CD4-positive, alpha-beta memory T cell (primary cell): ENCODE measurements at regions of chr12 and their contacts with region 1.

Region 1: GRCh38 chr12:51341259-51342007 is 5.0 kb downstream of the CELA1 start:
- DNase-seq: peak; percentile 72 to 77 (median 75)
- H3K4me3 ChIP-seq: no peak overlapping the region
- H3K4me3 Mint-ChIP-seq: peak overlapping the region in 5 of 8 donors; percentile 39 to 77 (median 64)
- H3K27ac ChIP-seq: no peak overlapping the region
- H3K27ac Mint-ChIP-seq: peak overlapping the region in 6 of 7 donors; percentile 38 to 89 (median 68)
- H3K4me1 ChIP-seq: peaks cover 6% of the 10 kb centered on the region
- H3K4me1 Mint-ChIP-seq: peaks cover 6 to 9% (median 8%) of the 10 kb centered on the region in 4 donors
- H3K27me3 ChIP-seq: no peaks in the 10 kb centered on the region
- H3K27me3 Mint-ChIP-seq: no peaks in the 10 kb centered on the region

Region 2: GRCh38 chr12:51047655-51048540 is 293.5 kb before region 1 on chr12 and contains the start of gene LETMD1:
- CTCF ChIA-PET with region 1: interaction called, 26 read pairs
- POLR2A ChIA-PET with region 1: interaction called, 4 read pairs
- intact Hi-C with region 1: loop called (anchors 1 kb)
- DNase-seq: peak; percentile 94 to 97 (median 96)
- H3K4me3 ChIP-seq: peak within 1 kb of the TSS; percentile 92 to 98
- H3K4me3 Mint-ChIP-seq: peak within 1 kb of the TSS; percentile 93 to 98 (median 95)
- H3K27ac ChIP-seq: peak within 1 kb of the TSS; percentile 81
- H3K27ac Mint-ChIP-seq: peak within 1 kb of the TSS; percentile 95 to 99 (median 97)
- H3K4me1 ChIP-seq: peaks cover 27% of the 10 kb centered on the region
- H3K4me1 Mint-ChIP-seq: peaks cover 15 to 40% (median 28%) of the 10 kb centered on the region in 4 donors
- H3K27me3 ChIP-seq: no peaks in the 10 kb centered on the region
- H3K27me3 Mint-ChIP-seq: no peaks in the 10 kb centered on the region
- total RNA-seq, gene LETMD1: 83.7 to 93.3 TPM

Region 3: DNA sequence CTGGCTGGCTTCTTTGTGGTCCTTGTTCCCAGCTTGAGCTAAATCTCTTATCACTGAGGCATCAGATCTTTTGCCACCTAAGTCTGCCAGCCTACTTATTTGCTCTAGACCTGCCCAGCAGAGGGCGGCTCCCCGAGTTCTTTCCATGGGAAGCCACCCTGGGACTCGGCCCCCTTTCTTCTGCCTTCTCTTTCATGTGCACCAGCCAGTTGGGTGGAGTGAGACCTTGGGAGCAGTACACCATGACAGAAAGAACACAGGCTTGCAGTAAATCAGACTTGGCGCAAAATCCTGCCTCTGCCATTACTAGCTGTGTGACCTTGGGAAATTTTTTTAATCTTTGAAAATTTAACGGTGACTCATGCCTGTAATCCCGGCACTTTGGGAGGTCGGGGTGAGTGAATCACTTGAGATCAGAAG is 78.7 kb before region 1 on chr12:
- CTCF ChIA-PET with region 1: interaction called, 199 read pairs
- POLR2A ChIA-PET with region 1: interaction called, 5 read pairs
- intact Hi-C with region 1: no loop called
- DNase-seq: no peak
- H3K4me3 ChIP-seq: no peak overlapping the region
- H3K4me3 Mint-ChIP-seq: no peak overlapping the region
- H3K27ac ChIP-seq: no peak overlapping the region
- H3K27ac Mint-ChIP-seq: peak overlapping the region in 4 of 7 donors; percentile 15 to 70 (median 45)
- H3K4me1 ChIP-seq: peaks cover 7% of the 10 kb centered on the region
- H3K4me1 Mint-ChIP-seq: peaks cover 16 to 30% (median 20%) of the 10 kb centered on the region in 4 donors
- H3K27me3 ChIP-seq: no peaks in the 10 kb centered on the region
- H3K27me3 Mint-ChIP-seq: no peaks in the 10 kb centered on the region

Region 4: GRCh38 chr12:51307655-51308593 is 33.5 kb before region 1 on chr12:
- CTCF ChIA-PET with region 1: interaction called, 191 read pairs
- POLR2A ChIA-PET with region 1: interaction called, 11 read pairs
- intact Hi-C with region 1: loop called (anchors 1 kb)
- DNase-seq: no peak
- H3K4me3 ChIP-seq: no peak overlapping the region
- H3K4me3 Mint-ChIP-seq: peak overlapping the region in 5 of 8 donors; percentile 12 to 70 (median 27)
- H3K27ac ChIP-seq: no peak overlapping the region
- H3K27ac Mint-ChIP-seq: peak overlapping the region; percentile 60 to 92 (median 84)
- H3K4me1 ChIP-seq: peaks cover 56% of the 10 kb centered on the region
- H3K4me1 Mint-ChIP-seq: peaks cover 44 to 79% (median 60%) of the 10 kb centered on the region in 4 donors
- H3K27me3 ChIP-seq: no peaks in the 10 kb centered on the region
- H3K27me3 Mint-ChIP-seq: no peaks in the 10 kb centered on the region

Region 5: GRCh38 chr12:51351913-51352532 is 10.6 kb after region 1 on chr12:
- CTCF ChIA-PET with region 1: interaction called, 30 read pairs
- POLR2A ChIA-PET with region 1: interaction called, 5 read pairs
- intact Hi-C with region 1: no loop called
- DNase-seq: peak; percentile 49 to 60 (median 50)
- H3K4me3 ChIP-seq: no peak overlapping the region
- H3K4me3 Mint-ChIP-seq: no peak overlapping the region
- H3K27ac ChIP-seq: no peak overlapping the region
- H3K27ac Mint-ChIP-seq: peak overlapping the region in 5 of 7 donors; percentile 5 to 83 (median 28)
- H3K4me1 ChIP-seq: no peaks in the 10 kb centered on the region
- H3K4me1 Mint-ChIP-seq: peaks cover 0 to 12% (median 4%) of the 10 kb centered on the region in 4 donors
- H3K27me3 ChIP-seq: no peaks in the 10 kb centered on the region
- H3K27me3 Mint-ChIP-seq: no peaks in the 10 kb centered on the region

Region 6: GRCh38 chr12:51814311-51815088 is 473.1 kb after region 1 on chr12:
- CTCF ChIA-PET with region 1: no interaction called
- POLR2A ChIA-PET with region 1: no interaction called
- intact Hi-C with region 1: no loop called
- DNase-seq: peak; percentile 50 to 63 (median 60)
- H3K4me3 ChIP-seq: peak overlapping the region in 1 of 2 donors; percentile 52
- H3K4me3 Mint-ChIP-seq: peak overlapping the region; percentile 79 to 91 (median 86)
- H3K27ac ChIP-seq: no peak overlapping the region
- H3K27ac Mint-ChIP-seq: peak overlapping the region in 4 of 7 donors; percentile 28 to 85 (median 54)
- H3K4me1 ChIP-seq: peaks cover 4% of the 10 kb centered on the region
- H3K4me1 Mint-ChIP-seq: peaks cover 2 to 23% (median 11%) of the 10 kb centered on the region in 4 donors
- H3K27me3 ChIP-seq: no peaks in the 10 kb centered on the region
- H3K27me3 Mint-ChIP-seq: peaks cover 2% of the 10 kb centered on the region in 2 donors